Caco-2 (cell line): ENCODE measurements at regions of chr16 and their contacts with region 1.

Region 1: GRCh38 chr16:65117811-65118448 is 3.9 kb downstream of the CDH11 start:
- DNase-seq: peak; percentile 70 to 74
- H3K4me3 ChIP-seq: no peak overlapping the region
- H3K4me3 Mint-ChIP-seq: no peak overlapping the region
- H3K27ac Mint-ChIP-seq: no peak overlapping the region
- H3K4me1 ChIP-seq: peaks cover 15% of the 10 kb centered on the region
- H3K4me1 Mint-ChIP-seq: peaks cover 2% of the 10 kb centered on the region
- H3K27me3 ChIP-seq: peaks cover 2% of the 10 kb centered on the region
- H3K27me3 Mint-ChIP-seq: peaks cover 28% of the 10 kb centered on the region
- CTCF ChIP-seq: peak; percentile 89 to 93

Region 2: DNA sequence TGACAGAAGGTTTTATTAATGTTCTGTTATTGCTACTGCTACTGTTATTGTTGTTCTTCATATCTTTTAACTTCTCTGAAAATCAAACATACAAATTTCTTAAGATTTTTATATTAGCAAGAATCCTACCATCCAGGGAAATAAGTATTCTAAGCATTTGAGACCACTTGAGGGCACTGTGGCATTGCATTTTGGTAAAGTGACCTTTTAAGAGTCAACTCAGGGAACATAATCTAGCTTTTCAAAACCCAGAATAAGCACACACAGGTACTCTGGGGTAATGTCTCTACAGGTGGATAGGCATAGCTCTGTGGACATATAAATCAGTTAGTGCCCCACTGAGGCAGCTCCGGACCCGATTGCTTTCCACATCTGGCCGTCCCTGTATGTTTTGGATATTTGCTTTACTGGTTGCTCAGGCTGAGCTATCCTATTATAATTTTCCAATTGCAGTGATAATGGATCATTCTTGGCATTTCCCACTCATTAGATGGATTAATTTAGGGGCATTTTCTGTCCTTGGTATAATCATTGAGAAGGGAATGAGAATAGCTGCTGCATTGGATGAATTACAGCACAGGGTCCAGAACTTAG is 1656.6 kb before region 1 on chr16:
- CTCF ChIA-PET with region 1: no interaction called
- POLR2A ChIA-PET with region 1: no interaction called
- intact Hi-C with region 1: loop called (anchors 1 kb)
- DNase-seq: peak; percentile 27 to 39
- H3K4me3 ChIP-seq: no peak overlapping the region
- H3K4me3 Mint-ChIP-seq: no peak overlapping the region
- H3K27ac Mint-ChIP-seq: no peak overlapping the region
- H3K4me1 ChIP-seq: no peaks in the 10 kb centered on the region
- H3K4me1 Mint-ChIP-seq: no peaks in the 10 kb centered on the region
- H3K27me3 ChIP-seq: no peaks in the 10 kb centered on the region
- H3K27me3 Mint-ChIP-seq: no peaks in the 10 kb centered on the region
- CTCF ChIP-seq: peak; percentile 45 to 52

Region 3: DNA sequence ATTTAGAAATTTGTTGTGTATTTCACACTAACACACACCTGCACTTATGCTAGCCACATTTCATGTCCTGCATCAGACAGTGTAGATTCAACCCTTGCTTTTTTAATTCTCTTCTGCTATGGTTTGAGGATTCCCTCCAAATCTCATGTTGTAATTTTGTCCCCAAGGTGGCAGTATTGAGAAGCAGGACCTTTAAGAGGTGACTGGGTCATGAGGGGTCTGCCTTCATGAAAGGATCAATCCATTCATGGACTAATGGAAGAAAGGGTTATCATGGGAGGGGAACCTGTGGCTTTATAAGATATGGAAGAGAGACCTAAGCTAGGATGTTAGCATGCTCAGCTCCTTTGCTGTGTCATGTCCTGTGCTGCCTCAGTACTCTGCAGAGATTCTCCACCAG is 1028.2 kb before region 1 on chr16:
- CTCF ChIA-PET with region 1: no interaction called
- POLR2A ChIA-PET with region 1: no interaction called
- intact Hi-C with region 1: loop called (anchors 1 kb)
- DNase-seq: peak in 1 of 2 experiments; percentile 38
- H3K4me3 ChIP-seq: no peak overlapping the region
- H3K4me3 Mint-ChIP-seq: no peak overlapping the region
- H3K27ac Mint-ChIP-seq: no peak overlapping the region
- H3K4me1 ChIP-seq: no peaks in the 10 kb centered on the region
- H3K4me1 Mint-ChIP-seq: no peaks in the 10 kb centered on the region
- H3K27me3 ChIP-seq: no peaks in the 10 kb centered on the region
- H3K27me3 Mint-ChIP-seq: peaks cover 2% of the 10 kb centered on the region
- CTCF ChIP-seq: peak; percentile 52 to 63

Region 4: GRCh38 chr16:64478252-64478906 is 639.6 kb before region 1 on chr16:
- CTCF ChIA-PET with region 1: no interaction called
- POLR2A ChIA-PET with region 1: no interaction called
- intact Hi-C with region 1: loop called (anchors 2 kb)
- DNase-seq: peak; percentile 73 to 76
- H3K4me3 ChIP-seq: no peak overlapping the region
- H3K4me3 Mint-ChIP-seq: peak overlapping the region; percentile 15
- H3K27ac Mint-ChIP-seq: peak overlapping the region; percentile 12
- H3K4me1 ChIP-seq: peaks cover 32% of the 10 kb centered on the region
- H3K4me1 Mint-ChIP-seq: peaks cover 35% of the 10 kb centered on the region
- H3K27me3 ChIP-seq: no peaks in the 10 kb centered on the region
- H3K27me3 Mint-ChIP-seq: no peaks in the 10 kb centered on the region
- CTCF ChIP-seq: no peak

Region 5: DNA sequence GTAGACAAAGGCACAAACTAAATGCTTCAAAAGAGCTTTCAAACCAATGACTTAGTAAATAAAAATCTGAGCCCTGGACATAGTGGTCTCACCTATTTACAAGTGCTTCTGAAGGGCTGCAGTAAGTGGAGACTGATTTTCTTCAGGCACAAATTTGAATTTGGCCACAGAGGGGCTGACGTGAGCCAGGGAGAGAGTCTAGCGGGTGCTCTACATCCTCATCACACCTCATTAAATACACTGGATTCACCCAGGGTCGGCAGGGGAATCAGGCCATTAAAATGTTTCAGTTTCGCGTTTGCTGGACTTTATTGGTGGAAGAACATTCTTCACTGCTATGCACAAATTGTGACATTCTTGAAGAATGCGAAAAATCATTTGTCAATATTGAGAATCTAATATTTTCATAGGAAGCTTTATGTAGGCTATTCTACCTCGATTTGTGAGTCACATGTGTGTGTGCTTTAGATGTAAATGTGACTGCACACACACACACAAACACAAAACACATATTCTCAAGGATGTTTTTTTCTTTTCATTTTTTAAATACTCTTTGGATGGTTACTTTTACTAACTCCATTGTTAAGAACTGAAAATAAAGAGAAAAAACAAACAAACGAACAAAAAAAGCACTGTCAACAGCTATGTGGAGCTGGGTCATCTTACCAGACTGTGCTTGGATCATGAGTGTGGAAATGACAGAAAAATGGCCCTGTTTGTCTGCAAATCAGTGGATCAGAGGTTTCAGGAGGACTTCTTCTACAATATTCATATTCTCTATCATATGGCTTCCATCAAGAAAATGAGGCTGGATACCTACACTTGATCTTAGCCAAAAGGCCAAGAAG is 55.0 kb before region 1 on chr16:
- CTCF ChIA-PET with region 1: no interaction called
- POLR2A ChIA-PET with region 1: no interaction called
- intact Hi-C with region 1: loop called (anchors 2 kb)
- DNase-seq: no peak
- H3K4me3 ChIP-seq: no peak overlapping the region
- H3K4me3 Mint-ChIP-seq: no peak overlapping the region
- H3K27ac Mint-ChIP-seq: no peak overlapping the region
- H3K4me1 ChIP-seq: no peaks in the 10 kb centered on the region
- H3K4me1 Mint-ChIP-seq: no peaks in the 10 kb centered on the region
- H3K27me3 ChIP-seq: no peaks in the 10 kb centered on the region
- H3K27me3 Mint-ChIP-seq: peaks cover 24% of the 10 kb centered on the region
- CTCF ChIP-seq: no peak

Region 6: GRCh38 chr16:65235339-65236177 is 117.6 kb after region 1 on chr16:
- CTCF ChIA-PET with region 1: no interaction called
- POLR2A ChIA-PET with region 1: no interaction called
- intact Hi-C with region 1: no loop called
- DNase-seq: no peak
- H3K4me3 ChIP-seq: no peak overlapping the region
- H3K4me3 Mint-ChIP-seq: no peak overlapping the region
- H3K27ac Mint-ChIP-seq: no peak overlapping the region
- H3K4me1 ChIP-seq: no peaks in the 10 kb centered on the region
- H3K4me1 Mint-ChIP-seq: no peaks in the 10 kb centered on the region
- H3K27me3 ChIP-seq: no peaks in the 10 kb centered on the region
- H3K27me3 Mint-ChIP-seq: peaks cover 21% of the 10 kb centered on the region
- CTCF ChIP-seq: no peak

Region 7: GRCh38 chr16:66270333-66270927 is 1152.5 kb after region 1 on chr16:
- CTCF ChIA-PET with region 1: no interaction called
- POLR2A ChIA-PET with region 1: no interaction called
- intact Hi-C with region 1: loop called (anchors 10 kb)
- DNase-seq: peak; percentile 75 to 92
- H3K4me3 ChIP-seq: peak overlapping the region; percentile 26
- H3K4me3 Mint-ChIP-seq: peak overlapping the region; percentile 65
- H3K27ac Mint-ChIP-seq: no peak overlapping the region
- H3K4me1 ChIP-seq: 0 out of 2 replicates have a peak, but pooled peaks cover 13% of the 10 kb centered on the region
- H3K4me1 Mint-ChIP-seq: peaks cover 14% of the 10 kb centered on the region
- H3K27me3 ChIP-seq: no peaks in the 10 kb centered on the region
- H3K27me3 Mint-ChIP-seq: no peaks in the 10 kb centered on the region
- CTCF ChIP-seq: peak; percentile 84 to 99